ENCODE measurements at regions of chr10 and their contacts with region 1.

Region 1: DNA sequence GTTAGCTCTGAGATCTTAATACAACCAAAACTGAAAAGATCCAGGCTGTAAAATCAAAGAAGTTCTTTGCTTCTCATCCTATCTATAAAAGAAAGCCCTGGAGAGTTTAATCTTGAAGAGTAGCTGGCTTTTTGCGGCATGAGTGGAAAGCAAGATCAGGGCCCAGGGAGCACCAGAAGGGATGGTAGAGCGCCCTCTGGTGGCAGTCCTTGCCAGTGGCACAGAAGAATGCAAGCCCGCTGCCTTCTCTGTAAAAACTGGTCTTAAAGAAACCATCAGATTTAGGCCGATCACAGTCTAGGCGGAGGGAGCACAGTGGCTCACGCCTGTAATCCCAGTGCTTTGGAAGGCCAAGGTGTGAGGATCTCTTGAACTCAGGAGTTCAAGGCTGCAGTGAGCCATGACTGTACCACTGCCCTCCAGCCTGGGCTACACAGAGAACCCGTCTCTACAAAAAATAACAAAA is 35.6 kb downstream of the CPN1 start:
- DNase-seq: peak; percentile 87
- H3K4me3 Mint-ChIP-seq: no peak overlapping the region
- H3K27ac Mint-ChIP-seq: no peak overlapping the region
- H3K4me1 Mint-ChIP-seq: no peaks in the 10 kb centered on the region
- H3K27me3 Mint-ChIP-seq: no peaks in the 10 kb centered on the region

Region 2: DNA sequence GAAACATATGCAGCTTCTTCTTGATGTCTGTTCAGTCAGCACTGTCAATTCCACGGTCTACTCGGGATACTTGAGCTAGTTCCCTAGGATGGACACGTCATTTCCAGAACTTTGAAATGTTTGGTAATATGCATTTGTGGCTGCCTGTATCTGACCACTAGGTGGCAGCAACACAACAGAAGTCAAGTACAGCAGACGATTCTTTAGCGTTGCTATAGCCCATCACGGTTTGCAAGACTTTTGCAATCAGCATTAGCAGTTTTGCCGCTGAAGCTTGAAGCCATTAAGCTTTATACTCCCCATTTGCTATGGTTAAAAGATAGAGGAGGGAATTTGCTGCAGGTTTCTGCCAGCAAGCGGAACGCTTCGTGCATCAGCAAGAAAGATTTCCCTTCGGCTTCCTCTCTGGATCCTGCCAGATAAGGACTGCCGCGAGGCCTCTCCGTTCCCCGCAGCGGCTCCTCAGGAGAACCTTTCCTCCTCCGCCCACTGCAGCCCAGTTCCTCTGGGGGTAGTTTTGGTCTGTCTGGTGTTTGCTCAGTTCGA is 200.1 kb before region 1 on chr10:
- CTCF ChIA-PET with region 1: interaction called, 55 read pairs
- POLR2A ChIA-PET with region 1: interaction called, 3 read pairs
- DNase-seq: peak; percentile 85
- H3K4me3 Mint-ChIP-seq: peak overlapping the region; percentile 4
- H3K27ac Mint-ChIP-seq: no peak overlapping the region
- H3K4me1 Mint-ChIP-seq: peaks cover 7% of the 10 kb centered on the region
- H3K27me3 Mint-ChIP-seq: no peaks in the 10 kb centered on the region

Region 3: GRCh38 chr10:99983280-99983988 is 62.6 kb before region 1 on chr10:
- CTCF ChIA-PET with region 1: no interaction called
- POLR2A ChIA-PET with region 1: no interaction called
- DNase-seq: no peak
- H3K4me3 Mint-ChIP-seq: no peak overlapping the region
- H3K27ac Mint-ChIP-seq: no peak overlapping the region
- H3K4me1 Mint-ChIP-seq: peaks cover 5% of the 10 kb centered on the region
- H3K27me3 Mint-ChIP-seq: no peaks in the 10 kb centered on the region

Region 4: GRCh38 chr10:100057948-100058347 is 11.9 kb after region 1 on chr10:
- CTCF ChIA-PET with region 1: no interaction called
- POLR2A ChIA-PET with region 1: no interaction called
- DNase-seq: no peak
- H3K4me3 Mint-ChIP-seq: no peak overlapping the region
- H3K27ac Mint-ChIP-seq: no peak overlapping the region
- H3K4me1 Mint-ChIP-seq: no peaks in the 10 kb centered on the region
- H3K27me3 Mint-ChIP-seq: peaks cover 33% of the 10 kb centered on the region